Right ventricle myocardium inferior (tissue), 1 donor: ENCODE measurements at regions of chr3 and their contacts with region 1.

Region 1: DNA sequence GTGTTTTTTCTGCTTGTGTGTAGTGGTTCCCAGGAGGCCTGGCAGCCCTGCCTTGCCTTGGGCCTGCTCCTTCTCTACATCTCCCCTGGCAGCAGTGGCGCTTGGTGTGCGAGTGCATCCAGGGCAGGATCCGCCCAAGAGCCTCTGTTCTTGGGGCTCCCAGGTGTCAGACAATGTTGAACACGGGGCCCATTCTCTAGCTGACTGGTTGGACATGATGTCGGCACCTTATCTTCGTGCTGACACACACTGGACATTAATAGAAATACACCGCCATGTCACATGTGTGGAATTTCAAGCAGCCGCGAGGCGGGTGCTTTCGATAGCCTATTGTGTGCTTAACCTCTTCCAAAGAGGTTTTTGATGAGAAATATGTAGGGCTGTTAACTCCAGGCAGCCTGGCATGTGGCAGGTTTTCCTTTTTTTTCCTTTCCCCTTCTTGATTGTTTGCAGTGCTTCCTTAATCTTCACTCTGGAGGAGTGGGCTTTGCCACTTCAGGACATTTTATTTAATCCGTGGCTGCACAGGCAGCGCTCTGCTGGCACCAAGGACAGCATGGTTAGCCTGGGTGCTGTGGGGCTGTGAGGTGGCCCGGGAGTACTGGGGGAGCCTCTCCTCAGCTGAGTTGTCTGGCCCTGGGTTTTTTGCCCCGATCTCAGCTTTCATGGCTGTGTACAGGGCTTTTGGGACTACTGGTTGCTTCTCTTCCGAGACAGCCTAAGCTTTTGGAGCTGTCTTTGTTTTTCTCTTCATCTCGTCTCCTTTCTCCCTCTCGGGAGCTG is 42.5 kb downstream of the CHCHD6 start:
- DNase-seq: peak; percentile 74
- ATAC-seq: peak; percentile 85

Region 2: GRCh38 chr3:126659945-126660886 is 86.4 kb before region 1 on chr3:
- intact Hi-C with region 1: no loop called
- DNase-seq: no peak
- ATAC-seq: no peak

Region 3: GRCh38 chr3:126679318-126679751 is 67.3 kb before region 1 on chr3:
- intact Hi-C with region 1: loop called (anchors 5 kb)
- DNase-seq: peak; percentile 93
- ATAC-seq: peak; percentile 77

Region 4: DNA sequence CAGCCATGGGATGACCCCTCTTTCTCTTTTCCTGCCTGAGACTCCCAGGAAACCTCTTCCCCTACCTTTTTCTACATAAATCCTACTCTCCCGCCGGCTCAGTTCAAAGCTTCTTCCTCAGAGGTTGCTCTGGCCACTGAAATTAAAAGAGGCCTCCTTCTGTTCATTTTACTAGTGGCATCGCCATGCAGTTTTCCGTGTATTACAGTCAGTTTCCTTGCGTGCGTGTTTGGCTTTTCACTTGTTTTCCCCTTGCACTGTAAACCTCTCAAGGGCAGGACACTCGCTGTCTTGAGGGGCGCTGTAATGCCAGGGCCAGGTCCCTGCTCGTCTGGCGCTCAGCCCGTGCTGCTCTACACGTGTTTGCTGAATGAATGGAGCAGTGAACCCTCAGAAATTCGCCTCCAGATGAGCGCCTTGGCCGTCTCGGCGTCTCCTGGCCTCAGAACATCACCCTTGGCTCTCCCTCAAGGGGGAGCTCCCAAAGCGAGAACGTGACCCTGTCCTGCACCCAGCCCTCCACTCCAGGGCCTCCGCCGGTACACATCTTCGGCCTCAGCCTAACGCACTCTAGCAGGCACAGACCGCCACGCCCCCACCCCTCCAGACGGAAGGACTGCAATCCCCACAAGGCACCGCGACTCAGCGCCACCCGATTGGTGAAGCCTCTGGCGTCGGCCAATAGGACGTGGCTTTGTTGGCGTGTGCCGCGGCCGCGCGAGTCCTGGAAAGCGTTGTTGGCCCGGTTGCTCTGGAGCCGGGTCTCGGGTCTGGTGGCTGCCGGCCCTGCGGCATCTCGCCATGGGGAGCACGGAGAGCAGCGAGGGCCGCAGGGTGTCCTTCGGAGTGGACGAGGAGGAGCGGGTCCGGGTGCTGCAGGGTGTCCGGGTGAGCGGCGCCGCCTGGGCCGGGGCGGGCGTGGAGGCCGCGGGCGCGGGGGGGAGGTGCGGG is 42.8 kb before region 1 on chr3 and contains the start of gene CHCHD6:
- intact Hi-C with region 1: loop called (anchors 2 kb)
- DNase-seq: peak; percentile 96
- ATAC-seq: peak; percentile 99
- total RNA-seq, gene CHCHD6: 11.7 TPM

Region 5: GRCh38 chr3:126850370-126851085 is 103.9 kb after region 1 on chr3:
- intact Hi-C with region 1: loop called (anchors 5 kb)
- DNase-seq: no peak
- ATAC-seq: peak; percentile 89

Region 6: GRCh38 chr3:127177231-127177630 is 430.6 kb after region 1 on chr3:
- intact Hi-C with region 1: loop called (anchors 2 kb)
- DNase-seq: no peak
- ATAC-seq: peak; percentile 28